HCT116 (cell line): ENCODE measurements at regions of chr4 and their contacts with region 1.

Region 1: GRCh38 chr4:140523857-140524742 is at the start of gene ELMOD2:
- DNase-seq: peak; percentile 92
- ATAC-seq: peak; percentile 99
- H3K4me3 ChIP-seq: peak within 1 kb of the TSS; percentile 85 to 92
- H3K27ac ChIP-seq: peak within 1 kb of the TSS; percentile 63
- H3K4me1 ChIP-seq: peaks cover 3 to 8% of the 10 kb centered on the region in 2 experiments; a peak in 2 of 4 replicates
- H3K27me3 ChIP-seq: no peaks in the 10 kb centered on the region
- CTCF ChIP-seq: peak; percentile 65 to 93 (median 91)
- POLR2A ChIP-seq: peak; percentile 74
- RAD21 ChIP-seq: peak; percentile 43; the same call in 1 of the 2 replicates
- total RNA-seq, gene ELMOD2: 26.6 TPM

Region 2: DNA sequence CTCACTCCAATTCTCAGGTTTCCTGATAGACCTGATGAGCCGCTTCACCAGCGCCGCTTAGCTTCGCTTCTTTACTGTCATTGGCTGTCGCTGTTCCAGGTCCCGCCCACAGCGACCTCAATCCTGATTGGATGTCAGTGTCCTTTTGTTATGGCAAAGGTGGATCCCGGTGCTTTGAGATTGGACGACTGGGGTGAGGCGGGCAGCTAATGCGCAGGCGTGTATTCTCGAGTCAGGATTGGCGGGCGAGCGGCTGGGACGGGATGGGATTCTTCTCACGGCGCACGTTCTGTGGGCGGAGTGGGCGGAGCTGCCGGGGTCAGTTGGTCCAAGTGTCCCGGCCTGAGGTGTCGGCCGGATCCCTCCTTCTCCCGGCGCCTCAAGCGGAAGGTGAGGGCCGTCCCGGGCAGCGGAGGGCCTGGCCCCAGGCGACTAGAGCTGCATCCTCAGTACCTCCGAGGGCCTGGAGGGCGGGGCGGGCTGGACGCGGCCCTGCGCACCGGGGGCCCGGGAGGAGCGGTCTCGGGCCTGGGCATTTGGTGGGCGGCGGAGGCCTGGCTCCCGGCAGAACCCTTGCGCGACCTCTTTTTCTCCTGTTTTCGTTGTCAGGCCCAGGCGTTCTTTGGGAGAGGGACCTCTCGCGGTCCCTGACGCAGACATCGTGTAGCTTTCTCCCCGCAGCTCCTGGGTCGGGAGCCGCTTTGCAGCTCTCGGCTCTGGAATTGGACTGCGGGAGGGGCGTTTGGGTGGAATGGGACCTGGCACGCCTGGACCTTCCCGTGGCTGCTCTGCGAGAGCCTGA is 150.6 kb before region 1 on chr4 and contains the start of gene SCOC:
- CTCF ChIA-PET with region 1: interaction called, 7 read pairs
- POLR2A ChIA-PET with region 1: no interaction called
- RAD21 ChIA-PET with region 1: no interaction called
- intact Hi-C with region 1: loop called (anchors 5 kb)
- DNase-seq: peak; percentile 98
- ATAC-seq: peak; percentile 94
- H3K4me3 ChIP-seq: peak within 1 kb of the TSS; percentile 77 to 84
- H3K27ac ChIP-seq: peak within 1 kb of the TSS; percentile 88
- H3K4me1 ChIP-seq: peaks cover 5 to 19% of the 10 kb centered on the region in 2 experiments
- H3K27me3 ChIP-seq: no peaks in the 10 kb centered on the region
- CTCF ChIP-seq: no peak
- POLR2A ChIP-seq: peak; percentile 50
- RAD21 ChIP-seq: no peak
- total RNA-seq, gene SCOC: 52.2 TPM